ENCODE measurements at regions of chr1 and their contacts with region 1.

Region 1: DNA sequence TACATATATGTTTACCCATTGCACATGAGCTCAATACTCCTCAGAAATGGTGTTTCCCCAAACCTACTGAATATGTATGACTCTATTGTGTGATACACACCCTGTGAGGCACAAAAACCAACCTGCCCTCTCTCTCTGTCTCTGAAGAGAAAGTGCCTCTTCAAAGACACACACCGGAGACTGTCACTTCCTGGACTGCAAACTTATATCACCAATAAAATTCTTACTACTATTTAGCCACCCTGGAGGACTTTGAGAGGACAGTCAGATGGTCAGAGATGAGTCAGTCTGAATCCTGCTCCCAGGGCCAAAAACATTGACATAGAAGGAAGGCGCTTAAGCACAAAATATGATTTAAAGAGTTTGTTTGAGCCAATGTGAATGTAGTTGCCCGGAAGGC is 110.4 kb downstream of the PPIAL4G start:
- DNase-seq: peak in 7 of 9 experiments; percentile 38 to 89 (median 70)
- ATAC-seq: peak; percentile 72
- H3K4me3 ChIP-seq: peak overlapping the region; percentile 20 to 23
- H3K4me3 Mint-ChIP-seq: peak overlapping the region; percentile 65
- H3K27ac ChIP-seq: peak overlapping the region; percentile 68 to 88
- H3K27ac Mint-ChIP-seq: peak overlapping the region; percentile 96
- H3K4me1 ChIP-seq: peaks cover 45% of the 10 kb centered on the region
- H3K4me1 Mint-ChIP-seq: peaks cover 54% of the 10 kb centered on the region
- H3K27me3 ChIP-seq: no peaks in the 10 kb centered on the region
- H3K27me3 Mint-ChIP-seq: no peaks in the 10 kb centered on the region
- CTCF ChIP-seq: no peak

Region 2: GRCh38 chr1:147292631-147293251 is 1080.0 kb before region 1 on chr1:
- CTCF ChIA-PET with region 1: no interaction called
- POLR2A ChIA-PET with region 1: no interaction called
- intact Hi-C with region 1: no loop called
- DNase-seq: no peak
- ATAC-seq: no peak
- H3K4me3 ChIP-seq: no peak overlapping the region
- H3K4me3 Mint-ChIP-seq: no peak overlapping the region
- H3K27ac ChIP-seq: no peak overlapping the region
- H3K27ac Mint-ChIP-seq: peak overlapping the region; percentile 39
- H3K4me1 ChIP-seq: no peaks in the 10 kb centered on the region
- H3K4me1 Mint-ChIP-seq: no peaks in the 10 kb centered on the region
- H3K27me3 ChIP-seq: no peaks in the 10 kb centered on the region
- H3K27me3 Mint-ChIP-seq: no peaks in the 10 kb centered on the region
- CTCF ChIP-seq: no peak

Region 3: DNA sequence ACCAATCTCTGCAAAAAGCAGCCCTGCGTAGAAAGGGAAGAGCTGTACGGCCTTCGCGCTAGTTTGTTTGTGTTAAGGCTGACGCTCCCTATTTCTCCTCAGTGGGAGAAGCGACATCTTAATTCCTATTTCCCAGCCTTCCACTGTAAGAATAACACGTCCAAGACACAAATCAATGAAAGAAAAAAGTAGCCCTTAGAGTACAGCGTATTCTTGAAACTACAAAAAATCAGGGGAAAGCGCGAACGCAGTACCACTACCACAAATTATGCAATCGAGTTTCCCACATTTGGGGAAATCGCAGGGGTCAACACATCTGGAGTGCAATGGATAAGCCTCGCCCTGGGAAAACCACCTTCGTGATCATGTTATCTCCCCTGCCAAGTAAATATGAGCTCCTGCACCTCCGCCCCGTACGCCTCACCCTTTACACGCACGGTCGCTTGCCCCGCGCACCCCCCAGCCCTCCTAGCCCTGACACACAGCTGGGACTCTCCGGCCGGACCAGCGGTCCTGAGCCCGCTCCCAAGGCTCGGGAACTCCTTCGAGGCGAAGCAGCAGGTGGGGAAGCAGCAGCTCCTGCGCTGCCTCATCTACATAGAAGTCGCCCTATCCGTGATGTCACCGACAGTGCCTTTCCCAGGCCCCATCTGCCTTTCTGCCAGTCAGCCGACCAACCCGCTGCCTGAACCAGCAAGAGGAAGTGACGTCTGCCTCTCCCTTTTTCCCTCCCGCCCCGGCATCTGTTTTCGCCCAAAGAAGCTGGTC is 15.7 kb after region 1 on chr1:
- CTCF ChIA-PET with region 1: interaction called, 12 read pairs
- POLR2A ChIA-PET with region 1: interaction called, 15 read pairs
- intact Hi-C with region 1: loop called in 1 of 2 experiments (anchors 1 kb)
- DNase-seq: peak; percentile 76 to 95 (median 89)
- ATAC-seq: peak; percentile 90
- H3K4me3 ChIP-seq: peak overlapping the region; percentile 48 to 68
- H3K4me3 Mint-ChIP-seq: peak overlapping the region; percentile 96
- H3K27ac ChIP-seq: peak overlapping the region; percentile 91 to 97
- H3K27ac Mint-ChIP-seq: peak overlapping the region; percentile 100
- H3K4me1 ChIP-seq: peaks cover 8% of the 10 kb centered on the region
- H3K4me1 Mint-ChIP-seq: peaks cover 46% of the 10 kb centered on the region
- H3K27me3 ChIP-seq: no peaks in the 10 kb centered on the region
- H3K27me3 Mint-ChIP-seq: no peaks in the 10 kb centered on the region
- CTCF ChIP-seq: no peak

Region 4: DNA sequence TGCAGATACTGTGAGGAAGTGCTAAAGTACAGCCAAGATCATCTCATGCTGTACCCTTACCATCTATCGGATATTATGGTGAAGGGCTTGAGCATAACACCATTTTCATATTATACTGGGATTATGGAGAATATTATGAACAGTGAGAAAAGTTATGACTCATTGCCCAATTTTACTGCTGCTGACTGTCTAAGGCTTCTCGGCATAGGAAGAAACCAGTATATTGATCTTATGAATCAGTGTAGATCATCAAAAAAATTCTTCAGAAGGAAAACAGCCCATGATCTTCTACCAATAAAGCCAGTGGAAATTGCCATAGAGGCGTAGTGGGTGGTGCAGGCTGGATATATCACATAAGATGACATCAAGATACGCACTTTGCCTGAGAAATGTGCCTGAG is 62.7 kb after region 1 on chr1:
- CTCF ChIA-PET with region 1: no interaction called
- POLR2A ChIA-PET with region 1: no interaction called
- intact Hi-C with region 1: loop called in 1 of 2 experiments (anchors 5 kb)
- DNase-seq: no peak
- ATAC-seq: no peak
- H3K4me3 ChIP-seq: no peak overlapping the region
- H3K4me3 Mint-ChIP-seq: no peak overlapping the region
- H3K27ac ChIP-seq: no peak overlapping the region
- H3K27ac Mint-ChIP-seq: peak overlapping the region; percentile 28
- H3K4me1 ChIP-seq: peaks cover 16% of the 10 kb centered on the region
- H3K4me1 Mint-ChIP-seq: peaks cover 69% of the 10 kb centered on the region
- H3K27me3 ChIP-seq: no peaks in the 10 kb centered on the region
- H3K27me3 Mint-ChIP-seq: no peaks in the 10 kb centered on the region
- CTCF ChIP-seq: no peak

Measured in CD8-positive, alpha-beta T cell (primary cell).